BJ (cell line): ENCODE measurements at regions of chr11 and their contacts with region 1.

Region 1: DNA sequence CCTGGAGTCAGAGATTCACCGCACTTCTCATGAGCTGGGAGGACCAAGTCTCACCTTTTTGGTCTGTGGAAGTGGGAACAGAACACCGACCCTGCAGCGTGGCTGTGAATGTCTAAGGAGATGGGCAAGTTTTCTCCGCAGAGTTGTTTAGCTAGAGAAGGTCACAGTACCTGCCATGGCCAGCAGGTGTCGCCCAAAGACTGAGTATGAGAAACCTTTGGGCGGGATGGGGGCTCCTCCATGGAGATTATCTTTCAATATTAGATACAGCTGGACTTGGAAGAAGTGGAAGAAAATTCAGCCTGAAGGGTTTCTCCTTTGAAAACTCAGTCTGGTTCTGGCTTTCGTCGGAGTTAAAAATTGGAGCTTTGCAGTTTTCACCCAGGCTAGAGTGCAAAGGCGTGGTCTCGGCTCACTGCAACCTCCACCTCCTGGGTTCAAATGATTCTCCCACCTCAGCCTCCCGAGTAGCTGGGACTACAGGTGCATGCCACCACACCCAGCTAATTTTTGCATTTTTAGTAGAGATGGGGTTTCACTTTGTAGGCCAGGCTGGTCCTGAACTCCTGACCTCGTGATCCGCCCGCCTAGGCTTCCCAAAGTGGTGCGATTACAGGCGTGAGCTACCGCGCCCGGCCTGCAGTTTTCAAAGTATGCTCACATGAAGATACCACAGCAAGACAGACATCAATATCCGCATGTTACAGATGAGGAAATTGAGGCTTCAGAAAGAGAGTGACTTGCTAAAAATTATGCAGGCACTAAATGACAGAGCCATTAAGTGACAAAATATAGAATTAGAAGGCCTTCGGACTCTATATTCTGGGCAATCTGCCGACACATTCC is 10.7 kb upstream of the DSCAML1 start:
- DNase-seq: no peak
- H3K4me3 ChIP-seq: no peak overlapping the region
- H3K27me3 ChIP-seq: peaks cover 2% of the 10 kb centered on the region
- CTCF ChIP-seq: peak; percentile 89

Region 2: DNA sequence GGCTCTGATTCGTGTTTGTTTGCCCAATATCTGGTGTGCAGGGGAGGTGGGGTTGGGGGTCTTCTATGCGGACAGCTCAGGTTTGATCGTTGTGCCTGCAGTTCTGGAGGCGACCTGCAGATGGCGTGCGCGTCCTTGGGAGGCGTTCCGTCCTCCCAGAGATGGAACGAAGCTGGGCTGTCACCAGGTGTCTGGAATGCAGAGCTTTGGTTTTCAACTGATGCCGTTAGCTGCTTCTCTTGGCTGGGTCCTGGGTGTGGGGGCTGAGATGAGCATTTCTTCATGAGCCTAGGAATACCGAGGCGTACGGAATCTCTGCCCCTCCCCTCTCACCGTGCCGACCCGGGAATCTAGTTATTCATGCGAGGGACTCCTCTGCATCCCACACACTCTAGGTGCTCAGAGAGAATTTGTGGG is 381.4 kb before region 1 on chr11:
- CTCF ChIA-PET with region 1: interaction called, 26 read pairs
- POLR2A ChIA-PET with region 1: no interaction called
- DNase-seq: no peak
- H3K4me3 ChIP-seq: no peak overlapping the region
- H3K27me3 ChIP-seq: peaks cover 5% of the 10 kb centered on the region
- CTCF ChIP-seq: peak; percentile 99

Region 3: DNA sequence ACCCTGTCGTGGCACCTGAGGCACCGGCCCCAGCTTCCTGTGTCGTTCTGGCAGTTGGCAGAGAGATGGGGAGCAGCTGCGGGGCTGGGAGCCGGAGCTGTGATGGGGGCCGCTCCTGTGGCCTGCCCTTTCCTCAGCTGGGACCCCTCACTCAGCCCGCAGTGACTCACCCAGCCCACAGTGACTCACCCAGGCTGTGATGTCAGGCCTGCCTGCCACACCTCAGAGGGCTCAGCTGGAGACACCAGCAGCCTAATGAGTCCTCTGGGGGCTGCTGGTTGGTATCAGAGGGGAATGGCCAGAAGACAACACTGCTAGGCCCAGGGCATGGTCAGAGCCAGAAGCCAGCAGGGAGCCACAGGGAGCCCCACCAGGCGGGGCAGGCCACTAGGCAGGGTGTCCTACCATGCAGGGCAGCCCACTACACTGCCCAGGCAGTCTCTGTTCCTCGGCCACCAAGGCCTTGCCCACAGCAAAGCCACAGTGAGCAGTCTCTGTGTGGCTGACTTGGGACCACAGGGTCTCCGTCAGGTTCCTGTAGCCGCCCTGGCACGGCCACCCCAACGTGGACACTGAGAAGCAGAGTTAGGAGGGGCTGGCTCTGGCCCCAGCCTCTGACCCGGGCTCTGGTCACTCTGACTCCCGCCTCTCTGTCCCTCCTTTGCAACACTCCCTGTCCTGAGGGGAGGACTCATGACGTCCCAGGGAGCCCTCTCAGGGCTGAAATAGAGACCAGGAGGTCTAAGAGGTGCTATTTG is 21.1 kb after region 1 on chr11:
- CTCF ChIA-PET with region 1: interaction called, 32 read pairs
- POLR2A ChIA-PET with region 1: no interaction called
- DNase-seq: no peak
- H3K4me3 ChIP-seq: no peak overlapping the region
- H3K27me3 ChIP-seq: peaks cover 2% of the 10 kb centered on the region
- CTCF ChIP-seq: no peak

Region 4: GRCh38 chr11:117946842-117947526 is 139.3 kb after region 1 on chr11:
- CTCF ChIA-PET with region 1: interaction called, 40 read pairs
- POLR2A ChIA-PET with region 1: no interaction called
- DNase-seq: peak; percentile 50
- H3K4me3 ChIP-seq: no peak overlapping the region
- H3K27me3 ChIP-seq: no peaks in the 10 kb centered on the region
- CTCF ChIP-seq: peak; percentile 94